Posterior cingulate gyrus (tissue), 11 donors: ENCODE measurements at regions of chr5 and their contacts with region 1.

Region 1: DNA sequence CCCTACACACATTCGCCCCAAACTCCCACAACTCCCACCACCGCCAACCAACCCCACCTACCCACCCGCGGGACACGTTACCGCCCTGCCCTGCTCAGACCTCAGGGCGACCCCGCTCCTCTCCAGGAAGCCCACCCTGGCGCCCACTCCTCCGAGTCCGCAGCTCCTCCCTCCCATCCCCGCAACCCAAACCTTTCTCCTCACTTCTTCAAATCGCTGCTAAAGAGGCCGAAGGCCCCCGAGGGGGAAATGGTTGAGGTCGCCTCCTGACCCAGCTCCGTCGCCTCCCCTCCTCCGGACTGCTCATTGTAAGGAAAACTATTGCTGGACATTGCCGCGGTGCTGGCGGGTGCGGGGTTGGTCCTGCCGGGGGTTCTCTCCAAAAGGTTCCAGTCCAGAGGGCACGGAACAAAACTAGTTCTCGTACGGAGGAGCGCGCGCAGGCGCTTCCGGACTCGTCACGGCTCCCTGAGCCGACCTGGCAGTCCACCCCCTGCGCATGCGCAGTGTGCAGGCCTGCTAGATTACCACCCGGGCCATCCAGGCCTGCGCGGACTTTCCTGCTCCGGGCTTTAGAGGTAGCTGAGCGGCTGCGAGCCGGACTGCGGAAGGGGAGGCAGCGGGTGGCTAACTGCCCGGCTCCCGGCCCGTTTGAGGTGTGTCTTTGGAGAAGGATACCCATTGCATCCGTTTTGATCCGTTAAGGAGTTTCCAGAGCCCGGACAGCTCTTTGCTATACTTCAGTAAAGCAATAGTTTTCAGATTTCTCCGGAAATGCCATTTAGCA is at the start of gene AP3B1:
- DNase-seq: peak; percentile 94 to 99 (median 98)

Region 2: DNA sequence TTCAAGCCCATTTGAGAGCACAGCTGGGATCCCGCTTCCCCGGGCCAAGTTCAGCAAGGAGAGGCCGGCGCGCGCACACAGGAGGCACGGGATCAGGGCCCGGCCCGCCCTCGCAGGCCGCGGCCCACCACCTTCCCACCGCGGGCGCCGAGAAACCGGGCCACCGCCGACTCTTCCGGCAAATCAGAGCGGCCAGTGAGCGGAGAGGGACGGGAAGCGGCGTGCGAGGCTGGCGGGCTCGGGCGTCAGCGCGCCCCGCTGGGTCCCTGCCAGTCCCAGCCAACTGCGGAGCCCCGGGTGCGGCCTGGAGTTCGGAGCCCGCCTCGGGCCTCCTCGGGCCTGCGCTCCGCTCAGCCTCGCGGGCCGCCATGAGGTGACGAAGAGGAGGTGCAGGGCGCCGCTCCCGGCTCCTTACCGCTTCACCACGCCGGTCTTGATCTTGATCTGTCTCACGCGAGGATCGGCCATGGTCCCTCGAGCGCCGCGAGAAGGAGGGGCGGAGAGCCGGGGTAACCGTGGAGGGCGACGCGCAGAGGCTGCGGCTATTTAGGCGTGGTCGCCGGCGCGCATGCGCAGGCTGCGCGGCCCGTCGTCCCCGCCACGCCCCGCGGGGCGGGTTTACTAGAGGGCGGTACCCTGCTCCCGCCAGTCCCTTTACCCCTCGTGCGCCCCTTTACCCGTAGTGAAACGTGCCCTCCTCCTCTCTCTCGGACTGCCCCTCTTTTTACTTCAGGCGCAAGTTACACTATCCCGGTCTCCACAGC is 518.5 kb before region 1 on chr5 and contains the start of gene TBCA:
- intact Hi-C with region 1: loop called (anchors 10 kb)
- DNase-seq: peak; percentile 75 to 98 (median 84)

Region 3: GRCh38 chr5:78359831-78360673 is 65.6 kb after region 1 on chr5 and contains the start of gene SCAMP1:
- intact Hi-C with region 1: loop called (anchors 1 kb)
- DNase-seq: peak; percentile 82 to 98 (median 90)

Region 4: DNA sequence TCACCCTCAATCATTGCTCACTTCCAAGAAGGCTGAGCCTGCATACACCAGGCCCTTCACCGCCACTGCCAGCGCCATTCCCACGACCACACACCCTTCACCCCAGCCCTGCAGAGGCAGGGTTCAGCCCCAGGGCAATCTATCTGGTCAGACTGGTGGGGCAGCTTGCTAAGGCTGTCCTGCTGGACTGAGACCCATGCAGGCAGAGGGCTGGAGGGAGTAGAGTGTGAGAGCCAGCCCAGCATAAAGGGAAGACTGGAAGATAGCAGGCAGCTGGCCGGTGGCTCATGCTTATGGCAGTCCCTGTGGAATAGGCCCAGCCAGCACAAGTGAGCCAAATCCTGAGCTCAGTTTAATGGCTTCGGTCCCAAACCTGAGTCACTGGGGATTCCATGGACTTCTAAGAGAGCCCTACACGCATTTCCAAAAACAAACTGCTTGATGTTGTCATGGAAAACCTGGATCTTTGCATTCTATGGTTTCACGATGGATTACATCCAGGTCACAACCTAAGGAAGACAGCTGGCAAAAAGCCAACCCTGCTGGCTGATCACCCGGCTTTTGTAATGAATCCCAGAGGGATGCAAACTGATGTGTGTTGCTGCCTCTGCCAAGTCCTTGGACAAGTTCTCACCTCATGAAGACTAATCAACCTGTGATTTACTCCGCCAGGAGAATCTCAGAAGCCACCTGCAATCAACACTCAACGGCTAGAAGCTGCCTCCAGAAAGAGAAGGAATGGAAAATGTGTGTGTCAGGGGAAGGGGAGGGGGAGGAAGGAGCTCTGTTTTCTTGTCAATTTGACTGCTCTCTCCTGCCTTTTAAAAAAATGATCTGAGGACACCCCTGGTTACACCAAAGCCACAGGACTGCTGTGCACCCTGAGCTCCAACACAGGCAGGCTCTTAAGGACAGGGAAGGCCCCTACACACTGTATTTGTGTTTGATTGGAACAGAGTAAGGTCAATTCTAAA is 210.6 kb after region 1 on chr5:
- intact Hi-C with region 1: no loop called
- DNase-seq: peak; percentile 71 to 97 (median 78)

Region 5: DNA sequence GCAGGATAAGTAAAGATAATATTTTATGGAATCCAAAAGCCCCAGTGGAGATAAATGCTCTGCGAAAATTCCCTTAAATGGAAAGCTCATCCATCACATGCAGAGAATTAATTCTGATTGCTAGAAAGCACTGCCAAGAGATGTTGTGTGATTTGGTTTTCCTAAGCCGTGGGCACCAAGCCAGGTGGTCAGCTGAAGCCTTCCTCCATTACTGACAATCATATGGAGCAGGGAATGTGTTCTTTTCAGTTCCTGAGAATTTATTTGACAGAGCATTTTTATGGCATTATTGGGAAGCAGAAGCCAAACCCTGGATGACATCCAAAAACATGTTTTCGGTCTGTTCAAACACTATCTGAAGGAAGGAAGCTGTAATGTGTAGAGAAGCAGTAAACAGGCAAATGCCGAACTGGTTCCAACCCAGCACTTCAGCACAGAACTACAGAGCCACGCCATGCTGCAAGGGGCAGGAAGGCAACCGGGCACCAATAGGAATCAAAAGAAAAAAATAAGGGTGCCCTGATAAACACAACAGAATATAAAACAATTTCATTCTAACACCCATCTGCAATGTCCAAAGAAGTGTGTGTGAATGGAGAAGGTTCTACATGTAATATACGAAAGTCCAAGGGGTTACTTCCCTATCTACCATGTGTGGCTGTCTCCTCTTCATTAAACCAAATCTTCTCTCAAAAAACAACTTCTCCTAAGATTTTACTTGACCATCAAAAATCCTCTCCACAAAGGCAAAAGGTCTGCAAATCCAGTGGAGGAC is 678.4 kb after region 1 on chr5:
- intact Hi-C with region 1: loop called (anchors 10 kb)
- DNase-seq: peak in 5 of 10 donors; percentile 16 to 86 (median 31)